Heart left ventricle (tissue), 16 donors: ENCODE measurements at regions of chr6 and their contacts with region 1.

Region 1: GRCh38 chr6:3294921-3295871 is 36.4 kb downstream of the PSMG4 start:
- DNase-seq: peak in 1 of 5 donors; percentile 47
- ATAC-seq: peak in 3 of 4 donors; percentile 32 to 70 (median 60)
- H3K4me3 ChIP-seq: no peak overlapping the region
- H3K27ac ChIP-seq: no peak overlapping the region
- H3K4me1 ChIP-seq: peaks cover 0 to 16% (median 0%) of the 10 kb centered on the region in 12 donors
- H3K27me3 ChIP-seq: no peaks in the 10 kb centered on the region
- CTCF ChIP-seq: peak in 3 of 12 donors; percentile 10 to 19 (median 18)
- POLR2A ChIP-seq: no peak

Region 2: DNA sequence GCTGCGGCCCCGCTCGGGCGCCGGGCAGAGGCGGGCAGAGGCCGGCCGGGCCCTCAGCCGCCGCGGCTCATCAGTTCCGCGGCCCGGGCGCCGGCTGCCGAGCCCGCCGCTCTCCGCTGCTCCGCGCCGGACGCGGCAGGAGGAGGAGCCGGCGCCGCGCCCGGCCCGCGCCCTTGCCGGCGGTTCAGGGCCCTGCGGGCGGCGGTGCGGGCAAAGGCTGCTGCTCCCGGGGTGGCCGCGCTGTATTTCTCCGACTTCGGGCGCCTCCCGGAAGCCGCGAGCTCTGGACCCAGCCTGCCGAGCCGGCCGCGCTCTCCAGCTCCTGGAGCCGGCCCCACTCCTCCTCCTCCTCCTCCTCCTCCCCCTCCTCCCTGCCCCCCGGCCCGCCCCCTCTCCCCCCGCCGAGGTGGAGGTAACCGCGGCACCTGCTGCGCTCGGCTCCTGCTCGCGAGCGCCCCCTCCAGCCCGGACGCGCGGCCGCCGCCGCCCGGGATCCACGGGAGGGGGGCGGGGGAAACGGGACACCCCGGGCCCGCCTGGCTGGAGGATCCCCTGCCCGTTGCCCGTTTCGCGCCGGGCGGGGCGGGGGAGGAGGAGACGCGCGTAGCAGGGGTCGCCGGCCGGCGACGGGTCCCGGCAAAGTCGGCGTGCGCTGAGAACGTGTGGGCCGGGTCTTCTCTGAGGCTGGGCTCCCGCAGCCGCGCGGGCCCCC is 161.7 kb after region 1 on chr6 and contains the start of gene SLC22A23:
- intact Hi-C with region 1: loop called in 2 of 10 experiments (anchors 10 kb)
- DNase-seq: peak; percentile 62 to 76 (median 71)
- ATAC-seq: peak; percentile 41 to 90 (median 80)
- H3K4me3 ChIP-seq: peak within 1 kb of the TSS; percentile 54 to 84 (median 64)
- H3K27ac ChIP-seq: peak within 1 kb of the TSS in 10 of 12 donors; percentile 1 to 82 (median 60)
- H3K4me1 ChIP-seq: peaks cover 0 to 41% (median 29%) of the 10 kb centered on the region in 12 donors
- H3K27me3 ChIP-seq: peaks cover 0 to 60% (median 3%) of the 10 kb centered on the region in 9 donors
- CTCF ChIP-seq: peak; percentile 48 to 89 (median 74)
- POLR2A ChIP-seq: no peak
- total RNA-seq, gene SLC22A23: 4.4 to 12.4 (median 5.2) TPM